ENCODE measurements at regions of chr14 and their contacts with region 1.

Region 1: GRCh38 chr14:54773171-54773975 is 129.3 kb downstream of the GCH1 start:
- DNase-seq: peak in 36 of 42 donors; percentile 23 to 85 (median 60)

Region 2: GRCh38 chr14:54566410-54567223 is 206.8 kb before region 1 on chr14 and contains the start of gene SAMD4A:
- intact Hi-C with region 1: loop called (anchors 1 kb)
- DNase-seq: peak; percentile 51 to 88 (median 74)

Region 3: GRCh38 chr14:54676812-54677708 is 96.3 kb before region 1 on chr14:
- intact Hi-C with region 1: no loop called
- DNase-seq: peak in 13 of 42 donors; percentile 22 to 69 (median 52)